ENCODE measurements at regions of chrX and their contacts with region 1.

Region 1: GRCh38 chrX:57251965-57252364 is 34.5 kb upstream of the FAAH2 start:
- DNase-seq: no peak
- ATAC-seq: no peak
- H3K4me3 ChIP-seq: no peak overlapping the region
- H3K27ac ChIP-seq: no peak overlapping the region
- H3K4me1 ChIP-seq: no peaks in the 10 kb centered on the region
- H3K27me3 ChIP-seq: no peaks in the 10 kb centered on the region
- CTCF ChIP-seq: no peak
- EP300 ChIP-seq: no peak
- POLR2A ChIP-seq: no peak
- RAD21 ChIP-seq: no peak

Region 2: GRCh38 chrX:57204306-57204705 is 47.7 kb before region 1 on chrX:
- CTCF ChIA-PET with region 1: no interaction called
- POLR2A ChIA-PET with region 1: no interaction called
- RAD21 ChIA-PET with region 1: no interaction called
- SMC1A ChIA-PET with region 1: no interaction called
- in situ Hi-C with region 1: no loop called
- intact Hi-C with region 1: no loop called
- DNase-seq: no peak
- ATAC-seq: no peak
- H3K4me3 ChIP-seq: no peak overlapping the region
- H3K27ac ChIP-seq: no peak overlapping the region
- H3K4me1 ChIP-seq: no peaks in the 10 kb centered on the region
- H3K27me3 ChIP-seq: no peaks in the 10 kb centered on the region
- CTCF ChIP-seq: no peak
- EP300 ChIP-seq: no peak
- POLR2A ChIP-seq: no peak
- RAD21 ChIP-seq: no peak

Region 3: GRCh38 chrX:57353472-57354132 is 101.6 kb after region 1 on chrX:
- CTCF ChIA-PET with region 1: no interaction called
- POLR2A ChIA-PET with region 1: no interaction called
- RAD21 ChIA-PET with region 1: no interaction called
- SMC1A ChIA-PET with region 1: no interaction called
- in situ Hi-C with region 1: no loop called
- intact Hi-C with region 1: loop called (anchors 10 kb)
- DNase-seq: no peak
- ATAC-seq: no peak
- H3K4me3 ChIP-seq: no peak overlapping the region
- H3K27ac ChIP-seq: no peak overlapping the region
- H3K4me1 ChIP-seq: no peaks in the 10 kb centered on the region
- H3K27me3 ChIP-seq: no peaks in the 10 kb centered on the region
- CTCF ChIP-seq: no peak
- EP300 ChIP-seq: no peak
- POLR2A ChIP-seq: no peak
- RAD21 ChIP-seq: no peak